Left cardiac atrium (tissue), 4 donors: ENCODE measurements at regions of chr19 and their contacts with region 1.

Region 1: GRCh38 chr19:55549500-55550320 is 4.4 kb upstream of the SBK3 start:
- DNase-seq: no peak
- ATAC-seq: peak in 1 of 2 donors; percentile 4

Region 2: DNA sequence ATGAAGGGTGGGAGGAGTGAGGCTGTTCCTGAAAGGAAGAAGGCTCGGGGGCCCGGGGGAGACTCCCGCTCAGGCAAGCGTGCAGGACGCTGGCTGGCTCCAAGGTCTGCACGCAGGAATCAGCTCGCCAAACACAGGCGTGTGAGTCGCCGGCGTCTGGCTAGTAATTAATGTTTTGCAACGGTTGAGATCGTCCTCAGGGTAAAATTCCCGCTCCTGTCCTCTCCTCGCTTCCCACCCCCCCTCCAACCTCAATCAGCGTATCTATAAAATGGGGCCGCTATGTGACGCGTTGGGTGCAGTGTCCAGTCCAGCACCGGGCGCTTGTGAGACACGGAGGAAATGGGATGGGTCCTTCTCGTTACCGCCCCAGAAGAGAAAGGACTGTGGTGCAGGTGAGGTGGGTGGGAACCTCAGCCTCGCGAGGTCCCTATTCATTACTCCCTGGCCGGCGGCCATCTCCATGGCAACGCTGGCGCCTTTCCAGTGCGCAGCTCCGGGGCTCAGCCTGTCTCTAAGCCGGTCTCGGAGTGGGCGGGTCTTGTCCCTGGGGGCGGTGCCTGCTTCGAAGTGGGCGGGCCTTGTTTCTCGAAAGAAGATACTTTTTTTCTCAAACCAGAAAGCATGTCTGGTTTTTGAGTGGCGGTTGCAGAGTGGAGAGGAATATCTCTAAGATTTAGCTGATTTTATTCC is 37.4 kb after region 1 on chr19:
- intact Hi-C with region 1: loop called in 1 of 2 experiments (anchors 5 kb)
- DNase-seq: peak; percentile 95
- ATAC-seq: peak; percentile 91